ENCODE measurements at regions of chr5 and their contacts with region 1.

Region 1: DNA sequence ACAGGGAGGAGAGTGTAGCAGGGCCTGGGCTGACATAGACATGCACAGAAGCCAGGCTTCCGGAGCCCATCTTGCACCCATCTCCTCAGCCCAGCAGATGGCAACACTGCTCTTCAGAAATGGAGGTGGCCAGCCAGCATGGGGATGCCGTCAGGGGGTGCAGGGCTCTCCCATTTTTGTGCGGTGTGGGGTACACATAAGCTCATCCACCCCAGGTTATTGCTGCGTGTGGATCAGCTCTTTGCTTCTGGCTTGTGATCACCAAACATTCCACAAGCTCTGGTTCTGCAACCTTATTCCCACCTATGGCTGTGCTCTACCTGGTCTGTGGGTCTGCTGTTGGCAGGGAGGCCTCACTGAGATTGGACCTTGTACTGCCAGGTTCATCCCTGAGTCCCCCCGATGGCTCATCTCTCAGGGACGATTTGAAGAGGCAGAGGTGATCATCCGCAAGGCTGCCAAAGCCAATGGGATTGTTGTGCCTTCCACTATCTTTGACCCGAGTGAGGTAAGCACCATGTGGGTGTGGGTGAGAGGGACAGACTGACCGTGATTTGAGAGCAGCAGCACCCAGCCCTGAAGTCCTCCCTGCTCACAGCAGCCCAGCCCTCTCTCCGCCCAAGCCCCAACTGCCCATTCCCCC is 17.3 kb downstream of the SLC22A5 start:
- DNase-seq: peak; percentile 65 to 77
- ATAC-seq: peak; percentile 76 to 94 (median 88)
- H3K4me3 ChIP-seq: no peak overlapping the region
- H3K27ac ChIP-seq: peak overlapping the region in 9 of 10 donors; percentile 70 to 95 (median 85)
- H3K4me1 ChIP-seq: peaks cover 18 to 68% (median 58%) of the 10 kb centered on the region in 9 donors
- H3K27me3 ChIP-seq: no peaks in the 10 kb centered on the region
- CTCF ChIP-seq: peak; percentile 66 to 93 (median 87)

Region 2: DNA sequence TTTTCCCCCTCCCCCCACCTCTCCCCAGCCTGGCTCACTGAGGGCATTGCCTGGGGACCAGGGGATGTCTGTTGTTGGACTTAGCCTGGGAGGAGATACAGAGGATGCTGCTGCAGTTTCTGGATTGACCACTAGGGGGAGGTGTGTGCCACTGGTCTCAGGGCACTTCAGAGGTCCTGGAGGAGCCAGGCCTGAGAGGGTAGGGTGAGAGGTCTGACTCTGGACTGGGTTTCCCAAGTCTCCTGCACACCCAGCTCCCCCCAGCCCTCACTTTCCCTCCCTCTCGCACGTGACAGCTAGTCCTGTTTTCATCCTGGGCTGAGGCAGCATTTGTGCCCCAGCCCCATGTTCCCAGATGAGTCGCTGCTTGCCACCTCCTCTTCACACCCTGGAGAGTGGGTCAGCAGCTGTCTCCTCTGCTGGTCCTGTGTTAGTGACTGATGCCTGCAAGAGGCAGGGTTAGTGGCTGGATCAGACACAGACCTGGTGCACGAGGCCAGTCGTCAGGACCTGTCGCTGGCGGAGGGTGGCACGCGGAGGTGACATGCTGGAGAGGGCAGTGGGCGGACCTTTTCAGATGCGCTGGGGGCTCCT is 321.9 kb before region 1 on chr5:
- intact Hi-C with region 1: loop called in 1 of 10 experiments (anchors 10 kb)
- DNase-seq: peak; percentile 49 to 71
- ATAC-seq: peak; percentile 45 to 86 (median 70)
- H3K4me3 ChIP-seq: no peak overlapping the region
- H3K27ac ChIP-seq: no peak overlapping the region
- H3K4me1 ChIP-seq: peaks cover 0 to 8% (median 0%) of the 10 kb centered on the region in 9 donors
- H3K27me3 ChIP-seq: no peaks in the 10 kb centered on the region
- CTCF ChIP-seq: peak; percentile 75 to 95 (median 90)

Region 3: DNA sequence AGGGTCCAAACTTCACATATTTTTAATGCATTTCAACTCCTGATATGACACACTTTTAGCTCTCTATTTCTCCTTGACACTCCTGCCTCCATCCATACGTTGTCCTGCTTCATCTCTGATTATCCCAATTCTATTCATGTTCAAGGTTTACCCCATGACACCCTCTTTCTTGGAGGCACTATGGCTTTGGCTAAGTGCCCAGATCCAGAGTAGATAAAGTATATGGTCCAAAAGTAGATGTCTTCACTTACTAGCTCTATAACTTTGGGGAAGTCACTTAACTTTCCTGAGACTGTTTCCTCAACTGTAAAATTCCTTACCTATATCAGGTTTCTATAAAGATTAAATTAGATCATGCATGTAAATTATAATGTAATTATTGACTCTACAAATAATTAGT is 18.9 kb after region 1 on chr5:
- intact Hi-C with region 1: loop called in 1 of 10 experiments (anchors 2 kb)
- DNase-seq: no peak
- ATAC-seq: no peak
- H3K4me3 ChIP-seq: no peak overlapping the region
- H3K27ac ChIP-seq: no peak overlapping the region
- H3K4me1 ChIP-seq: peaks cover 0 to 31% (median 26%) of the 10 kb centered on the region in 9 donors
- H3K27me3 ChIP-seq: no peaks in the 10 kb centered on the region
- CTCF ChIP-seq: no peak

Region 4: GRCh38 chr5:132500931-132501630 is 114.3 kb after region 1 on chr5:
- intact Hi-C with region 1: loop called (anchors 1 to 5 kb)
- DNase-seq: peak; percentile 55 to 73
- ATAC-seq: peak in 5 of 8 donors; percentile 10 to 46 (median 38)
- H3K4me3 ChIP-seq: no peak overlapping the region
- H3K27ac ChIP-seq: peak overlapping the region in 9 of 10 donors; percentile 0 to 100 (median 46)
- H3K4me1 ChIP-seq: peaks cover 15 to 69% (median 44%) of the 10 kb centered on the region in 9 donors
- H3K27me3 ChIP-seq: no peaks in the 10 kb centered on the region
- CTCF ChIP-seq: peak; percentile 77 to 89 (median 84)

Region 5: DNA sequence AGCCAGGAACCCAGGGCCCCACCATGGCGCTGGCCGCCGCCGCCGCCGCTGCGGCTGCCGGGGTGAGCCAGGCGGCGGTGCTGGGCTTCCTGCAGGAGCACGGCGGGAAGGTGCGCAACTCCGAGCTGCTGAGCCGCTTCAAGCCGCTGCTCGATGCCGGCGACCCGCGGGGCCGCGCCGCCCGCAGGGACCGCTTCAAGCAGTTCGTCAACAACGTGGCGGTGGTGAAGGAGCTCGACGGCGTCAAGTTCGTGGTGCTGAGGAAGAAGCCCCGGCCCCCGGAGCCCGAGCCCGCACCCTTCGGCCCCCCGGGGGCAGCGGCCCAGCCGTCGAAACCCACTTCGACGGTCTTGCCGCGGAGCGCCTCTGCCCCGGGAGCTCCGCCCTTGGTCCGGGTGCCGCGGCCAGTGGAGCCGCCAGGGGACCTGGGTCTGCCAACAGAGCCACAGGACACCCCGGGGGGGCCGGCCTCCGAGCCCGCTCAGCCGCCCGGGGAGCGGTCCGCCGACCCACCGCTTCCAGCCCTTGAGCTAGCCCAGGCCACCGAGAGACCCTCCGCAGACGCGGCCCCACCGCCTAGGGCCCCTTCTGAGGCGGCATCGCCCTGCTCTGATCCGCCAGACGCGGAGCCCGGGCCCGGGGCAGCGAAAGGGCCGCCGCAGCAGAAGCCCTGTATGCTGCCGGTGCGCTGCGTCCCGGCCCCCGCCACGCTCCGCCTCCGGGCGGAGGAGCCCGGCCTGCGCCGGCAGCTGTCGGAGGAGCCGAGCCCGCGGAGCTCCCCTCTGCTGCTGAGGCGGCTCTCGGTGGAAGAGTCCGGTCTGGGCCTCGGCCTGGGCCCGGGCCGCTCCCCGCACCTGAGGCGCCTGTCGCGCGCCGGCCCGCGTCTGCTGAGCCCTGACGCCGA is 427.1 kb after region 1 on chr5:
- intact Hi-C with region 1: loop called in 3 of 10 experiments (anchors 5 to 10 kb)
- DNase-seq: peak in 1 of 2 donors; percentile 27
- ATAC-seq: peak in 7 of 8 donors; percentile 33 to 82 (median 73)
- H3K4me3 ChIP-seq: peak overlapping the region; percentile 5 to 49 (median 42)
- H3K27ac ChIP-seq: no peak overlapping the region
- H3K4me1 ChIP-seq: peaks cover 0 to 17% (median 7%) of the 10 kb centered on the region in 9 donors
- H3K27me3 ChIP-seq: peaks cover 6 to 72% (median 49%) of the 10 kb centered on the region in 7 donors
- CTCF ChIP-seq: peak in 1 of 9 donors; percentile 10

Region 6: GRCh38 chr5:132883261-132883834 is 496.6 kb after region 1 on chr5:
- intact Hi-C with region 1: loop called in 1 of 10 experiments (anchors 10 kb)
- DNase-seq: peak in 1 of 2 donors; percentile 59
- ATAC-seq: peak; percentile 72 to 91 (median 86)
- H3K4me3 ChIP-seq: no peak overlapping the region
- H3K27ac ChIP-seq: no peak overlapping the region
- H3K4me1 ChIP-seq: peaks cover 0 to 10% (median under 1%) of the 10 kb centered on the region in 9 donors
- H3K27me3 ChIP-seq: no peaks in the 10 kb centered on the region
- CTCF ChIP-seq: peak; percentile 39 to 78 (median 68)